ENCODE measurements at regions of chr15 and their contacts with region 1.

Region 1: GRCh38 chr15:62403164-62403809 is 238.2 kb upstream of the C2CD4B start:
- DNase-seq: peak in 1 of 2 donors; percentile 48
- ATAC-seq: peak; percentile 77 to 86
- H3K4me3 ChIP-seq: no peak overlapping the region
- H3K27ac ChIP-seq: peak overlapping the region; percentile 18 to 65 (median 60)
- H3K4me1 ChIP-seq: peaks cover 30 to 49% of the 10 kb centered on the region in 2 donors
- H3K27me3 ChIP-seq: no peaks in the 10 kb centered on the region
- CTCF ChIP-seq: no peak
- POLR2A ChIP-seq: no peak

Region 2: DNA sequence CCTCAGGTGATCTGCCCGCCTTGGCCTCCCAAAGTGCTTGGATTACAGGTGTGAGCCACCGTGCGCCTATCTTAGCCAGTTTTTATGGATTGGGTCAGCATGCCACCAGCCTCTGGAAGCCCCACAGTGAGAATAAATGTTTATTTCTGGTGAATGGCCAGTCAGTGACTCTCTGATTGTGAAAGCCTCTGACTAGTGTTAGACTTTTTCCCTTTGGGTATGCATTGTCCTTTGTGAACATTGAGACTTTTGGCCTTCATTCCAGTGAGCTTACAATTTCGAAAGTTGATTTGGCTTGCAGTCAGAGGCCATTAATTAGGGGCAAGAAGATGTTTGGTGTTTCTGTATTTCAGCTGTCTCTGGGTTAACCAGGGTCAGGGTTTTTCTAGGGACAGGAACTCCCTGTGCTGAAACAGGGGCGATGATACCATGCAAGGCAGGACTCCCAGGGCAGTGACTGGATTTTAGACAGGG is 36.3 kb after region 1 on chr15:
- in situ Hi-C with region 1: no loop called
- intact Hi-C with region 1: loop called (anchors 5 kb)
- DNase-seq: peak; percentile 34 to 55
- ATAC-seq: peak; percentile 71 to 78
- H3K4me3 ChIP-seq: no peak overlapping the region
- H3K27ac ChIP-seq: peak overlapping the region; percentile 38 to 69 (median 56)
- H3K4me1 ChIP-seq: peaks cover 35 to 52% of the 10 kb centered on the region in 2 donors
- H3K27me3 ChIP-seq: no peaks in the 10 kb centered on the region
- CTCF ChIP-seq: no peak
- POLR2A ChIP-seq: no peak

Measured in gastrocnemius medialis (tissue), 4 donors.